Endothelial cell of umbilical vein (primary cell): ENCODE measurements at regions of chr3 and their contacts with region 1.

Region 1: GRCh38 chr3:114383875-114384557 is 90.2 kb downstream of the TIGIT start:
- DNase-seq: peak; percentile 81
- H3K4me3 ChIP-seq: peak overlapping the region; percentile 35 to 61 (median 42)
- H3K27ac ChIP-seq: peak overlapping the region; percentile 55
- H3K4me1 ChIP-seq: peaks cover 9% of the 10 kb centered on the region
- H3K27me3 ChIP-seq: no peaks in the 10 kb centered on the region
- CTCF ChIP-seq: peak; percentile 89 to 92
- POLR2A ChIP-seq: no peak

Region 2: GRCh38 chr3:114362815-114363214 is 21.2 kb before region 1 on chr3:
- CTCF ChIA-PET with region 1: interaction called, 12 read pairs
- POLR2A ChIA-PET with region 1: no interaction called
- dilution Hi-C with region 1: no loop called
- intact Hi-C with region 1: no loop called
- DNase-seq: peak; percentile 29
- H3K4me3 ChIP-seq: no peak overlapping the region
- H3K27ac ChIP-seq: no peak overlapping the region
- H3K4me1 ChIP-seq: no peaks in the 10 kb centered on the region
- H3K27me3 ChIP-seq: no peaks in the 10 kb centered on the region
- CTCF ChIP-seq: peak; percentile 2 to 18
- POLR2A ChIP-seq: no peak

Region 3: GRCh38 chr3:114405202-114405990 is 21.4 kb after region 1 on chr3:
- CTCF ChIA-PET with region 1: interaction called, 41 read pairs
- POLR2A ChIA-PET with region 1: no interaction called
- dilution Hi-C with region 1: no loop called
- intact Hi-C with region 1: no loop called
- DNase-seq: no peak
- H3K4me3 ChIP-seq: no peak overlapping the region
- H3K27ac ChIP-seq: no peak overlapping the region
- H3K4me1 ChIP-seq: peaks cover 6% of the 10 kb centered on the region
- H3K27me3 ChIP-seq: no peaks in the 10 kb centered on the region
- CTCF ChIP-seq: no peak
- POLR2A ChIP-seq: no peak

Region 4: GRCh38 chr3:114418724-114419543 is 34.9 kb after region 1 on chr3:
- CTCF ChIA-PET with region 1: interaction called, 136 read pairs
- POLR2A ChIA-PET with region 1: no interaction called
- dilution Hi-C with region 1: no loop called
- intact Hi-C with region 1: loop called (anchors 1 kb)
- DNase-seq: peak; percentile 78
- H3K4me3 ChIP-seq: no peak overlapping the region
- H3K27ac ChIP-seq: no peak overlapping the region
- H3K4me1 ChIP-seq: no peaks in the 10 kb centered on the region
- H3K27me3 ChIP-seq: no peaks in the 10 kb centered on the region
- CTCF ChIP-seq: peak; percentile 55 to 61
- POLR2A ChIP-seq: no peak

Region 5: DNA sequence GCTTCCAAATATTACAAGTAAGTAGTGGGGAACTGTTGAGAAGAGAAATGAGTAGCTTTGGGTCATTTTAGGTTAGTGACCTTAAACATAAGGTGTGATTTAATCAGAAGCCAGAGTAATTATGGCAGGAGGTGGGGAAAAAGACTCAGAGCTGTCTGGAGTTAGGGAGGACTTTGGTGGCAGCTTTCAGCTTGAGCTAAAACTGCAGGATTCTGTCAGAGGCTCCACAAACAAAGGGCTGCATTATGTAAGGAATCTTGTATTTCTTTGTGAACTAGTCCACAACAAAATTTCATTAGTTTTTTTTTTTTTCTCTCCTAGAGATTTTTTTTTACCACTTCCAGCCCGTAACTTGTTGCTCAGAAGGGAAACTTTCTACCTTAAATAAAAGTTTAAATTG is 255.2 kb after region 1 on chr3:
- CTCF ChIA-PET with region 1: no interaction called
- POLR2A ChIA-PET with region 1: no interaction called
- dilution Hi-C with region 1: no loop called
- intact Hi-C with region 1: no loop called
- DNase-seq: no peak
- H3K4me3 ChIP-seq: no peak overlapping the region
- H3K27ac ChIP-seq: no peak overlapping the region
- H3K4me1 ChIP-seq: no peaks in the 10 kb centered on the region
- H3K27me3 ChIP-seq: no peaks in the 10 kb centered on the region
- CTCF ChIP-seq: no peak
- POLR2A ChIP-seq: no peak

Region 6: GRCh38 chr3:114879059-114880031 is 495.3 kb after region 1 on chr3:
- CTCF ChIA-PET with region 1: no interaction called
- POLR2A ChIA-PET with region 1: no interaction called
- dilution Hi-C with region 1: no loop called
- intact Hi-C with region 1: loop called (anchors 10 kb)
- DNase-seq: peak; percentile 16
- H3K4me3 ChIP-seq: no peak overlapping the region
- H3K27ac ChIP-seq: no peak overlapping the region
- H3K4me1 ChIP-seq: peaks cover 9% of the 10 kb centered on the region
- H3K27me3 ChIP-seq: no peaks in the 10 kb centered on the region
- CTCF ChIP-seq: no peak
- POLR2A ChIP-seq: no peak

Region 7: DNA sequence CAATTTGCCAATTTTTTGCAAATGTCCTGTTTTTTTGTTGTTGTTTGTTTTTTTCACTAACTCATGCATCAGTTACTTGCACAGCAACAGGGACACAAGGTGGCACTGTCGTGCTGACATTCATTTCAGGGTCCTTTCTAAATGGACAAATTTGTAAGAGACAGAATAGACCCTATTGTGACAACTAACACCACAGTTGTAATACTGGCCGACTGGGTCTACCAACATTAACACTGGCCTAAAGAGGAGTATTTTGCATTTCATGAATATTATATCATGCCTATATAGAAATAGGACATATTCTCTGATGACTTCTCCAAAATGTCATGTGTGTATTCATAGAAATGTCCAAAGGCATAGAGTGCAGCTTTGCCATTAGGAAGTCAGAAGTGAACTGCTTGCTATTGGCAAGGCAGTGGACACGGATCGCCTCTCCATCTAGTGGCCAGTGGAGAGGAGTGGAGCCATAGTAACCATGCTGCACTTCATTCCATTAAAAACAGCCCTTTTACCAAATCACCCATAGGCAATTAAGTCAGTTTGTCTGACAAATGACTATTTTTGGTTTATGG is 708.3 kb after region 1 on chr3:
- CTCF ChIA-PET with region 1: interaction called, 28 read pairs
- POLR2A ChIA-PET with region 1: no interaction called
- dilution Hi-C with region 1: no loop called
- intact Hi-C with region 1: loop called (anchors 2 kb)
- DNase-seq: peak; percentile 70
- H3K4me3 ChIP-seq: no peak overlapping the region
- H3K27ac ChIP-seq: no peak overlapping the region
- H3K4me1 ChIP-seq: no peaks in the 10 kb centered on the region
- H3K27me3 ChIP-seq: no peaks in the 10 kb centered on the region
- CTCF ChIP-seq: peak; percentile 29 to 77
- POLR2A ChIP-seq: no peak

Region 8: GRCh38 chr3:115692887-115693524 is 1309.0 kb after region 1 on chr3:
- CTCF ChIA-PET with region 1: interaction called, 4 read pairs
- POLR2A ChIA-PET with region 1: no interaction called
- dilution Hi-C with region 1: no loop called
- intact Hi-C with region 1: loop called (anchors 2 kb)
- DNase-seq: peak; percentile 72
- H3K4me3 ChIP-seq: no peak overlapping the region
- H3K27ac ChIP-seq: no peak overlapping the region
- H3K4me1 ChIP-seq: no peaks in the 10 kb centered on the region
- H3K27me3 ChIP-seq: no peaks in the 10 kb centered on the region
- CTCF ChIP-seq: peak; percentile 75 to 77
- POLR2A ChIP-seq: no peak